ENCODE measurements at regions of chr17 and their contacts with region 1.

Region 1: DNA sequence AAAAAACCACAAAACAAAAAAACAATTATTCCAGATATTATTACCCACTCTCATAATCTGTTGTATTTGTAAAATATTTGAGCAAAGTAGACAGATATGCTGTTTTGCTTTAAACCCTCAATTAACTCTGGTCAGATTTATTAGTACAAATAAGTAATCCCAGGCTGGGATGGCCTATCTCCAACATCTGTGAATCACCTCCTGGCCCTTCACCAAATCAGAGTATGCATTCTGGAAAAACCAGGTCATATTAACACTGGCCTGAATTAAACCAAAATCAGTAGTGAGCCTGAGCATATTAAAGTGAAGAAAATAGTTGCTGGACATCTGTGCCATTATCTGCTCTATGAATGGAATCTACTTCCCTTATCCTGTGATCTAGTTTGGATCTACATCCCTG is 41.0 kb downstream of the STAT3 start:
- DNase-seq: no peak
- ATAC-seq: no peak
- H3K4me3 ChIP-seq: no peak overlapping the region
- H3K4me3 Mint-ChIP-seq: no peak overlapping the region
- H3K27ac ChIP-seq: no peak overlapping the region
- H3K27ac Mint-ChIP-seq: no peak overlapping the region
- H3K4me1 ChIP-seq: peaks cover 8% of the 10 kb centered on the region
- H3K4me1 Mint-ChIP-seq: peaks cover 35% of the 10 kb centered on the region
- H3K27me3 ChIP-seq: no peaks in the 10 kb centered on the region
- H3K27me3 Mint-ChIP-seq: no peaks in the 10 kb centered on the region
- CTCF ChIP-seq: no peak

Region 2: DNA sequence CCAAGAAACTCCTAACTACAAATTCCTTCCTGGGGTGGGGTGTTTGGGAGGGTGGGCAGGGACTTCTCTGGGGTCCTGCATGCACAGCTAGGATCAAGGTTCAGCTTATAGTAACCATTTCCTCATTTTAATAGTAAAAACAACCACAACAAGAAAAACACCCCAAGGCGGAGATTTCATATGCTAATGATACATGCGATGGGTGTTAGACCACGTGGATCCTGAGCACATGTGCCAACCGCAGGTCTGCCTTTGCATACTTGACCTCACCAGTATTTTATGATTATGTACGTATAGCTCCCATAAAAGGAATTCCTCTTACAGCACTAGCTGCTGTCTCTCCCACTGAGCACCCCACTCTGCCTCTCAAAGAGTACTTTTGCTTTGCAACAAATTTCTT is 1230.9 kb before region 1 on chr17:
- CTCF ChIA-PET with region 1: no interaction called
- POLR2A ChIA-PET with region 1: no interaction called
- intact Hi-C with region 1: loop called in 1 of 2 experiments (anchors 10 kb)
- DNase-seq: peak in 1 of 9 experiments; percentile 25
- ATAC-seq: peak; percentile 26
- H3K4me3 ChIP-seq: no peak overlapping the region
- H3K4me3 Mint-ChIP-seq: no peak overlapping the region
- H3K27ac ChIP-seq: no peak overlapping the region
- H3K27ac Mint-ChIP-seq: no peak overlapping the region
- H3K4me1 ChIP-seq: peaks cover 16% of the 10 kb centered on the region
- H3K4me1 Mint-ChIP-seq: peaks cover 35% of the 10 kb centered on the region
- H3K27me3 ChIP-seq: no peaks in the 10 kb centered on the region
- H3K27me3 Mint-ChIP-seq: peaks cover 6% of the 10 kb centered on the region
- CTCF ChIP-seq: no peak

Region 3: DNA sequence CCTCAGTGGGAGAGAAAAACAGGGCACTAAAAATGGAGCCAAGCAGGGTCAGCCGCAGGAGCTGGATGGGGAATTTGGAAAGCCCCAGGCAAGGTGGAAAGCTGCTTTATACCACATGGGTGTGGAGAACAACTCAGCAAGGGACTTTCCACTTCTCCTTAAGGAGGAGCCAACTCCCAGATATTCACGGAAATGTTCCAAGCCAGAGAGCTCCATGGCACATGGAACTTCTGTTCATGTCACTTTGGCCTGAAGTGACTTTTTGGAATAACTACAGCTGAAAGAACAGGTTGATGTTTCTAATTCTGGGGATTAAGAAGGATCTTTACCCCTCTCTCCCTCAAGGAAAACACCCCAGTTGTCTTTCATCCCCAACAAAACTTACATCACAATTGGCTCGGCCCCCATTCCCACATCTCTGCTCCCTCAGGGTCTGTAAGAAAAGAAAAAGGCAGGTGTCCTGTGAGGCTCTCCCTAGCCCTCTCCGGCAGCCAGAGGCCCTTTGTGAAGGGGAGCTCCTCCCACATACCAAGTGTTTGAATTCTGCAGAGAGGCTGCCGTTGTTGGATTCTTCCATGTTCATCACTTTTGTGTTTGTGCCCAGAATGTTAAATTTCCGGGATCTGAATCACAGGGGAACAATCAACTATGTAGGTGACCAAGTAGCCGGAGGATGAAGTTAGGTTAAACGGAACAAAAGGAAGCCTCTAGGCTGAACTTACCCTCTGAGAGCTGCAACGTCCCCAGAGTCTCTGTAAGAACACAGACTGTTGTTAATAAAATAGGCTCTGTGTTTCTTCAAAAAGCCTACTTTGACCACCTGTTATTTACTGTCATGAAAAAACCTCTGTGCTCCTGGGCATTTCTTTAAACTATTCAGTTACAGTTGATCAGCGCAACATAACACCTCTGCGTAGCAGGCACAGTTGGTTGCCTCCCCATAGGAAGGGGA is 17.9 kb before region 1 on chr17:
- CTCF ChIA-PET with region 1: no interaction called
- POLR2A ChIA-PET with region 1: no interaction called
- intact Hi-C with region 1: loop called in 1 of 2 experiments (anchors 1 kb)
- DNase-seq: no peak
- ATAC-seq: no peak
- H3K4me3 ChIP-seq: no peak overlapping the region
- H3K4me3 Mint-ChIP-seq: no peak overlapping the region
- H3K27ac ChIP-seq: no peak overlapping the region
- H3K27ac Mint-ChIP-seq: no peak overlapping the region
- H3K4me1 ChIP-seq: no peaks in the 10 kb centered on the region
- H3K4me1 Mint-ChIP-seq: peaks cover 3% of the 10 kb centered on the region
- H3K27me3 ChIP-seq: no peaks in the 10 kb centered on the region
- H3K27me3 Mint-ChIP-seq: no peaks in the 10 kb centered on the region
- CTCF ChIP-seq: no peak

Region 4: DNA sequence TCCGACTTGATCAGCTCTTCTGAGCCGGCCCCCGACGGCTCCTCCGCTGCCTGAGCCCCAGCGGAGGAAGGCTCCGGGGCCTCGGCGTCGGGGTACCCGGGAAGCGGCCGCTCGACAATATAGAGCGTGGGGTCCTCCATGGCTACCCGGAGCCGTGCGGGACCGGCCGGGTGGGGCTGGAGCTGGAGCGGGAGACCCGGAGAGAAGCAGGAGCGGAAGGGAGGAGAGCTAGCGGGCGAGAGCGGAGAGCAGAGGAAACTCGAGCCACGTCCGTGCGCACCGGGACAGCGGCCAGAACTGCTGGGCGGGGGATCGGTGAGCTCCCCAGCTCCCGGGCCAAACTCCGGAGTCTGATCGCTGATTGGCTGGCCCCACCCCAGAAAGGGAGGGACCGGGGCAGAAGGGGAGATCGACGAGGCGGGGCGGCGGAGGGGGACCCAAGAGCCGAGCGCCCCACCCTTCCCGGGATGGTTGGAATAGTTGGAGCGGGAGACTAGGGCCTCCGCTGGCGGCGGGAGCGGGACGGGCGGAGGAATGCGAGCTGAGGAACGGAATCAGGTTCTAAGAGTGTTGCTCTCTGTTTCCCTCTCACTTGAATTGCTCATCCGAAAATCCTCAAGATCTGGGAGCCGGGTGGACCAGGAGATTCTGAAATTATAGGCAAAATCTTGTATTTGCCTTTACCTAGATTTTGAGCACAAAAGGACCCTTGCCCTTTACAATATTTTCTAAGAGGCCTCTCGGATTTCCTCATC is 75.9 kb after region 1 on chr17 and contains the start of gene CAVIN1:
- CTCF ChIA-PET with region 1: no interaction called
- POLR2A ChIA-PET with region 1: no interaction called
- intact Hi-C with region 1: no loop called
- DNase-seq: no peak
- ATAC-seq: peak; percentile 12
- H3K4me3 ChIP-seq: peak within 1 kb of the TSS; percentile 26 to 35
- H3K4me3 Mint-ChIP-seq: peak within 1 kb of the TSS; percentile 86
- H3K27ac ChIP-seq: no peak within 1 kb of the TSS
- H3K27ac Mint-ChIP-seq: no peak within 1 kb of the TSS
- H3K4me1 ChIP-seq: peaks cover 11% of the 10 kb centered on the region
- H3K4me1 Mint-ChIP-seq: peaks cover 15% of the 10 kb centered on the region
- H3K27me3 ChIP-seq: peaks cover 11 to 17% of the 10 kb centered on the region in 2 experiments
- H3K27me3 Mint-ChIP-seq: peaks cover 34% of the 10 kb centered on the region
- CTCF ChIP-seq: no peak
- total RNA-seq, gene CAVIN1: not detected

Region 5: DNA sequence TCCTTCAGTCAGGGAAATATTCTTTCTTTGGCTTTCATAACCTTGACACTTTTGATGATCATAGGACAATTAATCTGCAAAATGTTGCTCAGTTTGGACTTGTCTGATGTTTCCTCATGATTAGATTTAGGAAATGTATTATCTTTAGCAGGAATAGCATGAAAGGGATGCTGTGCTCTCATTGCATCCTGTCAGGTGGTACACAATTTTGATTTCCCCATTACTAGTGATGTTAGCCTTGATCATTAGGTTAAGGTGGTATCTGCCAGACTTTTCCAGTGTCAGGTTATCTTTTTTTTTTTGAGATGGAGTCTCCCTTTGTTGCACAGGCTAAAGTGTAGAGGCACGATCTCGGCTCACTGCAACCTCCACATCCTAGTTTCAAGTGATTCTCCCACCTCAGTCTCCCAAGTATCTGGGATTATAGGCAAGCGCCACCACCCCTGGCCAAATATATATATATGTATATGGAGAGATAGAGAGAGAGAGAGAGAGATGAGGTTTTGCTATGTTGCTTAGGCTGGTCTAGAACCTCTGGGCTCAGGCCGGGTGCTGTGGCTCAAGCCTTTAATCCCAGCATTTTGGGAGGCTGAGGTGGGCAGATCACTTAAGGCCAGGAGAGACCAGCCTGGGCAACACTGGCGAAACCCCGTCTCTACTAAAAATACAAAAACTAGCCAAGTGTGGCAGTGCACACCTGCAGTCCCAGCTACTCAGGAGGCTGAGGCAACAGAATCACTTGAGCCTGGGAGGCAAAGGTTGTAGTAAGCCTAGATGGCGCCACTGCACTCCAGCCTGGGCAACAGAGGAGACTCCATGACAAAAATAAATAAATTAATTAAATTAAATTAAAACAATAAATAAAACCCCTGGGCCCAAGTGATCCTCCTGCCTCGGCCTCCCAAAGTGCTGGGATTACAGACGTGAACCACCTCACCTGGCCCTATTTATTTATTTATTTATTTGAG is 91.7 kb after region 1 on chr17:
- CTCF ChIA-PET with region 1: no interaction called
- POLR2A ChIA-PET with region 1: no interaction called
- intact Hi-C with region 1: no loop called
- DNase-seq: peak in 6 of 9 experiments; percentile 46 to 68 (median 55)
- ATAC-seq: no peak
- H3K4me3 ChIP-seq: no peak overlapping the region
- H3K4me3 Mint-ChIP-seq: no peak overlapping the region
- H3K27ac ChIP-seq: no peak overlapping the region
- H3K27ac Mint-ChIP-seq: no peak overlapping the region
- H3K4me1 ChIP-seq: peaks cover 8% of the 10 kb centered on the region
- H3K4me1 Mint-ChIP-seq: peaks cover 8% of the 10 kb centered on the region
- H3K27me3 ChIP-seq: no peaks in the 10 kb centered on the region
- H3K27me3 Mint-ChIP-seq: peaks cover 6% of the 10 kb centered on the region
- CTCF ChIP-seq: peak; percentile 52

Measured in CD8-positive, alpha-beta T cell (primary cell).